AG04450 (cell line): ENCODE measurements at regions of chr7 and their contacts with region 1.

Region 1: GRCh38 chr7:22726345-22727185 is 435 bp upstream of the IL6 start:
- DNase-seq: peak; percentile 83
- H3K4me3 ChIP-seq: peak overlapping the region; percentile 76
- H3K27ac ChIP-seq: peak overlapping the region; percentile 97
- H3K27me3 ChIP-seq: no peaks in the 10 kb centered on the region
- CTCF ChIP-seq: peak; percentile 66

Region 2: GRCh38 chr7:22586786-22587140 is 139.8 kb before region 1 on chr7:
- CTCF ChIA-PET with region 1: interaction called, 13 read pairs
- POLR2A ChIA-PET with region 1: interaction called, 4 read pairs
- DNase-seq: no peak
- H3K4me3 ChIP-seq: no peak overlapping the region
- H3K27ac ChIP-seq: no peak overlapping the region
- H3K27me3 ChIP-seq: no peaks in the 10 kb centered on the region
- CTCF ChIP-seq: peak; percentile 62

Region 3: DNA sequence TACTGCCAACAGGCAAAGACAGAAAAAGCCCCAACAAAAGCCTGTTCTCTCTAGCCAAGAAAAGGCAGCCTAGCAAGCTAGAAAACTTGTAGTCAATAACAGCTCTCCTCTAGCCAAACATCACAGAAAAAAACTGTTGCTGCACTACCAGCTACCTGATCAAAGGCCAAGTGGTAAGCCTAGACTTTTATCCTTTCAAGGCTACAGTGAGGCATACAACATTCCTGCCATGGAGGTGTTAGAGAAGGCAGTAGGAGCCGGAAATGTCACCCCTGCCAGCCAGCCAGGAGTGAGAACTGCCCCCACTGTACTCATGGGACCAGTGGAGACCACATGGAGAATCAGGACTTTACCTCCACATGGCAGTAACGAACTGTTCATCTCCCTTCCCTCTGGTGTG is 901.8 kb after region 1 on chr7:
- CTCF ChIA-PET with region 1: no interaction called
- POLR2A ChIA-PET with region 1: no interaction called
- DNase-seq: no peak
- H3K4me3 ChIP-seq: no peak overlapping the region
- H3K27ac ChIP-seq: no peak overlapping the region
- H3K27me3 ChIP-seq: no peaks in the 10 kb centered on the region
- CTCF ChIP-seq: no peak